PC-9 (cell line): ENCODE measurements at regions of chr7 and their contacts with region 1.

Region 1: DNA sequence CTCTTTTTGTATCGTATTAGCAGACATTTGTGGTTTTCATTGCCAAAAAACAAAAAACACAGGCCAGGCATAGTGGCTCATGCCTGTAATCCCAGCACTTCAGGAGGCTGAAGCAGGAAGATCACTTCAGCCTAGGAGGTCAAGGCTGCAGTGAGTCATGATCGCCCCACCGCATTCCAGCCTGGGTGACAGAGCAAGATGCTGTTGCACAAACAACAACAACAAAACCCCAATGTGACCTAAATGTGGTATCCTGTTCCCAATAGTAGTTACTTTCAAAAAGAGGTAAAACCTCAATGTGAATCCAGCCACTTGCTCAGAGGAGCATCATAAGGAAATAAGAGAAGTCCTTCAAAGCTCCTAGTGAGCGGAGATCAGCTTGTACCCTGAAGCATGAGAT is 45.8 kb upstream of the SKAP2 start:
- DNase-seq: peak; percentile 87 to 96
- H3K4me3 ChIP-seq: peak overlapping the region; percentile 16; the same call in 1 of the 2 replicates
- H3K27ac ChIP-seq: peak overlapping the region; percentile 79
- H3K4me1 ChIP-seq: peaks cover 47% of the 10 kb centered on the region
- H3K27me3 ChIP-seq: no peaks in the 10 kb centered on the region
- CTCF ChIP-seq: no peak

Region 2: GRCh38 chr7:26723129-26723528 is 187.1 kb before region 1 on chr7:
- CTCF ChIA-PET with region 1: no interaction called
- POLR2A ChIA-PET with region 1: no interaction called
- intact Hi-C with region 1: no loop called
- DNase-seq: no peak
- H3K4me3 ChIP-seq: no peak overlapping the region
- H3K27ac ChIP-seq: no peak overlapping the region
- H3K4me1 ChIP-seq: no peaks in the 10 kb centered on the region
- H3K27me3 ChIP-seq: no peaks in the 10 kb centered on the region
- CTCF ChIP-seq: no peak

Region 3: DNA sequence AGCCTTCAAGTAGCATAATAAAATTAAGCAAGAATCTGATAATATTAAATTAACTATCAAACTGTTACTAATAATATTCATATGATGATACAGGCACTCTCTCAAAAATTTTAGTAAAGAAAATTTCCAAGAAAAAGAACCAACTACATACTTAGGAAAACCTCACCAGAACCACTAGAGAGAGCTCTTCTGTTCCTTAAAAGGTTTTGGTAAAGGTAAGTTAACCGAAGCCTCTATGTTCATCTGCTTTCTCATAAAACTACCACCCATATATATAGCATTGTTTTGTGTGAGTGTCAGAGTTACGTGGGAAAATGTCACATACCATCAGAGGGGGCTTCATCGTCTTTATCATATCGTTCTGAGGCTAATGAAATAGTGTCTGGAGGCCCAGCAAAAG is 66.5 kb before region 1 on chr7:
- CTCF ChIA-PET with region 1: no interaction called
- POLR2A ChIA-PET with region 1: no interaction called
- intact Hi-C with region 1: no loop called
- DNase-seq: no peak
- H3K4me3 ChIP-seq: no peak overlapping the region
- H3K27ac ChIP-seq: no peak overlapping the region
- H3K4me1 ChIP-seq: no peaks in the 10 kb centered on the region
- H3K27me3 ChIP-seq: no peaks in the 10 kb centered on the region
- CTCF ChIP-seq: peak; percentile 55; the same call in 1 of the 2 replicates

Region 4: DNA sequence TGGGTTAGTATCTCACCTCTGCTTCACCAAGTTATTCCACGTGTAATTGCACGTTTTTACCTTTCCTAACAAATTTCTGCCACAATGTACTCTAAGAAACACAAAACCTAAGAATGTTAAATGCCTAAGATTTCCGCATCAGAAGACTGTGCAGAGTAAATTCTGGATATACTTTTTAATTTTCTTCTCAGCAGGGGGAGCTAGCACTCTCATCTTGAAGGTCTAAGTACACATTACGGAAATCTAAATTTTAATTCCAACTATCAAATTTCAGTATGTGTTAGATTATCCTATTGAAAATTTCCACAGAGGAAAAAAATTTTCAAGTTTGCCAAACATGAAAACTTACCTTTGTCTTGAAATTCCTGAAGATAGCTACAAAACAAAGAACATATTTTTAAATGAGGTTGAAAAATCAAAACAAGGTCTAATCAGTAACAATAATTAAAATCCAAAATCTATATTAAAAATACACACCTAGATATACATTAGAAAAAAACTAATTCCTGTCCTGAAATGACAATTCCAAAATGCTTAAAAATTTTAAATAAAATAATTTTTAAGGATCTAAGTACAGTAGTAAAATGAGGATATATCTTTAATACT is 56.3 kb before region 1 on chr7:
- CTCF ChIA-PET with region 1: interaction called, 23 read pairs
- POLR2A ChIA-PET with region 1: no interaction called
- intact Hi-C with region 1: no loop called
- DNase-seq: peak in 1 of 2 experiments; percentile 60
- H3K4me3 ChIP-seq: no peak overlapping the region
- H3K27ac ChIP-seq: no peak overlapping the region
- H3K4me1 ChIP-seq: peaks cover 24% of the 10 kb centered on the region
- H3K27me3 ChIP-seq: no peaks in the 10 kb centered on the region
- CTCF ChIP-seq: peak; percentile 90

Region 5: GRCh38 chr7:26924149-26924767 is 14.0 kb after region 1 on chr7:
- CTCF ChIA-PET with region 1: no interaction called
- POLR2A ChIA-PET with region 1: interaction called, 12 read pairs
- intact Hi-C with region 1: no loop called
- DNase-seq: peak in 1 of 2 experiments; percentile 16
- H3K4me3 ChIP-seq: no peak overlapping the region
- H3K27ac ChIP-seq: no peak overlapping the region
- H3K4me1 ChIP-seq: no peaks in the 10 kb centered on the region
- H3K27me3 ChIP-seq: no peaks in the 10 kb centered on the region
- CTCF ChIP-seq: no peak

Region 6: DNA sequence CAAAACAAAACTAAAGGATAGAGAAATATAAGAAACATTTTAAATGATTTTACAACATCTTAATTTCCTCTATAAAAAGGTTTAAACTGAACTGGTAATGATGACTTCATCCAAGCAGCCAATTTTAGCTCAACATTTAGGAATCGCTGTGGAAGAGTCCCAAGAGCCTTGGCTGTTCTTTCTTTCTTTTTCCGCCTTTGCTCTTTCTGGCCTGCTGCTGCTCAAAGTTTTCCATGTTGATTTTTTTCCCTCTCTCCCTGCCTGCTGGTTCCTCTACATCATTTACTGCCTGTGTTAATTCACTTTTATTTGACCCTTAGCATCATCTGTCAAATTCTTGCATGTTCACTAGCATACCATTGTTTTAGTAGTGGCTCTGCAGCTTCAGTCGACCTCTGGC is 479.3 kb after region 1 on chr7:
- CTCF ChIA-PET with region 1: no interaction called
- POLR2A ChIA-PET with region 1: no interaction called
- intact Hi-C with region 1: no loop called
- DNase-seq: no peak
- H3K4me3 ChIP-seq: no peak overlapping the region
- H3K27ac ChIP-seq: no peak overlapping the region
- H3K4me1 ChIP-seq: no peaks in the 10 kb centered on the region
- H3K27me3 ChIP-seq: no peaks in the 10 kb centered on the region
- CTCF ChIP-seq: no peak

Region 7: GRCh38 chr7:27399791-27400567 is 489.8 kb after region 1 on chr7:
- CTCF ChIA-PET with region 1: no interaction called
- POLR2A ChIA-PET with region 1: no interaction called
- intact Hi-C with region 1: no loop called
- DNase-seq: no peak
- H3K4me3 ChIP-seq: no peak overlapping the region
- H3K27ac ChIP-seq: no peak overlapping the region
- H3K4me1 ChIP-seq: no peaks in the 10 kb centered on the region
- H3K27me3 ChIP-seq: peaks cover 3% of the 10 kb centered on the region; the same call in 1 of the 2 replicates
- CTCF ChIP-seq: no peak